Aorta (tissue), 5 donors: ENCODE measurements at regions of chr17 and their contacts with region 1.

Region 1: DNA sequence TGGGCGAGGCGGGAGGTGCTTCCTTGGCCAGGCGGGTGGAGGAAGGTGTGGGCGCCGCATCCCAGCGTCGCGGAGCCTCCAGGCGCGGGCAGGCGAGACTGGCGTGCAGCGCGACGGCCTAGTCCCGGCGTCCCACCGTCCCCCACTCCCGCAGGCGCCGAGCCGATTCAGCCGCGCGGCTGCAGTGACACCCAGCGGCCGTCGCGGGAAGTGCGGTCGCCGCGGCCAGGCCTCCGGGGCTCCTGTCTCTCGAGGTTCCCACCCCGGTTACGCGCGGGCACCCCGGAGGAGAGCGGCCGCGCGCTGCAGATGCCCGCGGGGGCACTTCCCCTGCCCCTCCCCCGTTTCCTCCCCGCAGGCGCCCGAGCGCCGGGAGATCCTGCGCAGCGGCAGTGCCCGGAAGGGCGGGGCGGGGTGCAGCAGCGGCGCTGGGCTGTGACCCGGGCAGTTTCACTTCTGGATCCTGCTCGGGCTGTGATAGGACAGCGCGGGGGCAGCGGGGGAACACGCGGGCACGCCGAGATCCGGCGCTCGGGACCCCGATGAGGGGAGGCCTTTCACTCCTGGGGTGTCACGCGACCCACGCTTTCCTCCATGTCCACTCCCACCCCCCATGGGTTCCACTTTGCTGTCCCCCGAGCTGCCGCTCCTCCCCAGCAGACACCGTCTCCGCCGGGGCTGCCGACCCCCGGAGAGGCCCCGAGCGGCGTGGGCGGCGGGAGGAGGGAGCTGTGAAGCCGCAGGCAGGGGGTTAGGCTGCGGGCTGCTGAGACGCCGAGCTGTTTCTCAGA is 16.6 kb downstream of the GRB7 start:
- DNase-seq: peak; percentile 97 to 98
- ATAC-seq: peak; percentile 95
- H3K4me3 ChIP-seq: peak overlapping the region; percentile 42 to 67
- H3K27ac ChIP-seq: peak overlapping the region; percentile 49 to 62
- H3K4me1 ChIP-seq: no peaks in the 10 kb centered on the region
- H3K27me3 ChIP-seq: no peaks in the 10 kb centered on the region

Region 2: DNA sequence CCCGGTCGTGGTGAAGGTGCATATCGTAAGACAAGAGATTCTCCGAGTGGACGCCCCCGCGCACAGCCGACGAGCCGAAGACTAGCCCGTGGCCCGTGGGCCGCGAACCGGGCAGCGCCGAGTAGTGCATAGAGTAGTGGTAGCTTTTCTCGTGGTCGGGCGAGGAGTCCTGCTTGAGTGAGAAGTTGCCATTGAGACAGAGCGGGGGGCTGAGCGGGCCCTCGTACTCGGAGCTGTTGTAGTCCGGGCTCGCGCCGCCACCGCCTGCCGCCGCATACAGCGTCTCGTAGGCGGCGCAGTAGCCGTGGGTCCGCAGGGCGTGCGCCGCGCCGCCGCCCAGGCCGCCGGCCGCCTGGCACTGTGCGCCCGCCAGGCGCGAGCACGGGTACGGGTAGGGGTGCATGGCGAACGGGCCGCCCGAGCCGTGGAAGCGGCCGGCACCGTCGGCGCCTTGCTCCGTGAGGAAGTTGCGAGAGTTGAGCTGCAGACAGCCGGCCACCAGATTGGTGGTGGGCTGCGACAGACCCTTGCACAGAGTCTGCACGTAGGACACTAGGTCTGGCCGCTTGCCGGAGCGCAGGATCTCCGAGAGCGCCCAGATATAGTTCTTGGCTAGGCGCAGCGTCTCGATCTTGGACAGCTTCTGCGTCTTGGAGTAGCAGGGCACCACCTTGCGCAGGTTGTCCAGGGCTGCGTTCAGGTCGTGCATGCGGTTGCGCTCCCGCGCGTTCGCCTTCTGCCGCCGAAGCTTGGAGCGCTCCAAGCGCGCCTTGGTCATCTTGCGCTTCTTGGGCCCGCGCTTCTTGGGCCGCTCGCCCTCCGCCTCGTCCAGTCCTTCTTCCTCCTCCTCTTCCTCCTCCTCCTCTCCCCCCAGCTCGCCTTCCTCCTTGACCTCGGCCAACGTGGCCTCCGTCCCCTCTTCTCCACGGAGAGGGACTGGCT is 148.6 kb before region 1 on chr17:
- intact Hi-C with region 1: no loop called
- DNase-seq: no peak
- ATAC-seq: no peak
- H3K4me3 ChIP-seq: no peak overlapping the region
- H3K27ac ChIP-seq: no peak overlapping the region
- H3K4me1 ChIP-seq: peaks cover 0 to 2% of the 10 kb centered on the region in 2 donors
- H3K27me3 ChIP-seq: no peaks in the 10 kb centered on the region

Region 3: GRCh38 chr17:39636927-39637736 is 117.2 kb before region 1 on chr17 and contains the start of gene STARD3:
- intact Hi-C with region 1: loop called in 1 of 2 experiments (anchors 5 kb)
- DNase-seq: peak; percentile 96 to 98
- ATAC-seq: peak; percentile 94
- H3K4me3 ChIP-seq: peak within 1 kb of the TSS; percentile 78 to 91
- H3K27ac ChIP-seq: peak within 1 kb of the TSS in 1 of 2 donors; percentile 55
- H3K4me1 ChIP-seq: no peaks in the 10 kb centered on the region
- H3K27me3 ChIP-seq: no peaks in the 10 kb centered on the region
- total RNA-seq, gene STARD3: 34.7 to 58.1 TPM

Region 4: DNA sequence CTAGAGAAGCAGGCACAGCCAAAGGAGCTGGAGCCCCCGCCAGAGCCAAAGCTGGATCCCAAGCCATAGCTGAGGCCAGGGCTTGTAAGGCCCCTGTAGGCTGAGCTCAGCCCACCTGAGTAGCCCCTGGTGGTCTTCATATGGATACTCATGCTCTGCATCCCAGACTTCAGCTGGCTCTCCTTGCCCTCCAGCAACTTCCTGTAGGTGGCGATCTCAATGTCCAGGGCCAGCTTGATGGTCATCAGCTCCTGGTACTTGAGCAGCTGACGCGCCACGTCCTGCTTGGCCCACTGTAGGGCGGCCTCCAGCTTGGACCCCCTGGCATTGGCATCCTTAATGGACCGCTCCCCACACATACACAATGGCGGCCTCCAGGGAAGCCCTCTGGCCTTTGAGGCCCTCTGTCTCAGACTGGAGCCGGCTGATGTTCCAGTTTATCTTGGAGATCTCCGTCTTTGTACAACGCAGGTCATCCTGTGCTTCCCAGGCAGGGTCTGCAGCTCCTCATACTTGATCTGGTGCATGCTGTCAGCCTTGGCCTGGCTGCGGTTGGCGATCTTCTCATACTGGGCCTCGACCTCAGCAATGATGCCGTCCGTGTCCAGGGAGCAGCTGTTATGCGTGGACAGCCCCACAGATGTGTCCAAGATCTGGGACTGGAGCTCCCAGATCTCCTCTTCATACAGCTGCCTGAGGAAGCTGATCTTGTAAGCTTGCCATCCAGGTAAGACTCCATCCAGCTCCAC is 80.9 kb after region 1 on chr17:
- intact Hi-C with region 1: no loop called
- DNase-seq: no peak
- ATAC-seq: no peak
- H3K4me3 ChIP-seq: no peak overlapping the region
- H3K27ac ChIP-seq: no peak overlapping the region
- H3K4me1 ChIP-seq: no peaks in the 10 kb centered on the region
- H3K27me3 ChIP-seq: peaks cover 0 to 2% of the 10 kb centered on the region in 2 donors